ENCODE measurements at regions of chr13 and their contacts with region 1.

Region 1: GRCh38 chr13:95676762-95677563 is at the start of gene DNAJC3:
- DNase-seq: peak; percentile 97
- ATAC-seq: peak; percentile 94
- H3K4me3 Mint-ChIP-seq: peak within 1 kb of the TSS; percentile 96
- H3K27ac Mint-ChIP-seq: peak within 1 kb of the TSS; percentile 92
- H3K4me1 Mint-ChIP-seq: peaks cover 52% of the 10 kb centered on the region
- H3K27me3 Mint-ChIP-seq: no peaks in the 10 kb centered on the region
- CTCF ChIP-seq: no peak
- total RNA-seq, gene DNAJC3: 14.7 and 17.4 TPM in 2 replicates

Region 2: GRCh38 chr13:94549232-94550061 is 1127.5 kb before region 1 on chr13:
- CTCF ChIA-PET with region 1: no interaction called
- POLR2A ChIA-PET with region 1: interaction called, 3 read pairs
- intact Hi-C with region 1: loop called (anchors 2 kb)
- DNase-seq: peak; percentile 86
- ATAC-seq: peak; percentile 90
- H3K4me3 Mint-ChIP-seq: peak overlapping the region; percentile 88
- H3K27ac Mint-ChIP-seq: peak overlapping the region; percentile 92
- H3K4me1 Mint-ChIP-seq: peaks cover 31% of the 10 kb centered on the region
- H3K27me3 Mint-ChIP-seq: peaks cover 4% of the 10 kb centered on the region
- CTCF ChIP-seq: no peak

Region 3: GRCh38 chr13:95284436-95284835 is 392.5 kb before region 1 on chr13:
- CTCF ChIA-PET with region 1: no interaction called
- POLR2A ChIA-PET with region 1: no interaction called
- intact Hi-C with region 1: loop called (anchors 5 kb)
- DNase-seq: no peak
- ATAC-seq: no peak
- H3K4me3 Mint-ChIP-seq: no peak overlapping the region
- H3K27ac Mint-ChIP-seq: no peak overlapping the region
- H3K4me1 Mint-ChIP-seq: peaks cover 45% of the 10 kb centered on the region
- H3K27me3 Mint-ChIP-seq: no peaks in the 10 kb centered on the region
- CTCF ChIP-seq: no peak

Region 4: GRCh38 chr13:95387733-95388207 is 289.2 kb before region 1 on chr13:
- CTCF ChIA-PET with region 1: no interaction called
- POLR2A ChIA-PET with region 1: no interaction called
- intact Hi-C with region 1: loop called (anchors 5 kb)
- DNase-seq: no peak
- ATAC-seq: no peak
- H3K4me3 Mint-ChIP-seq: no peak overlapping the region
- H3K27ac Mint-ChIP-seq: no peak overlapping the region
- H3K4me1 Mint-ChIP-seq: peaks cover 32% of the 10 kb centered on the region
- H3K27me3 Mint-ChIP-seq: peaks cover 55% of the 10 kb centered on the region
- CTCF ChIP-seq: no peak

Region 5: GRCh38 chr13:95704510-95704909 is 27.5 kb after region 1 on chr13:
- CTCF ChIA-PET with region 1: no interaction called
- POLR2A ChIA-PET with region 1: interaction called, 6 read pairs
- intact Hi-C with region 1: loop called (anchors 2 kb)
- DNase-seq: no peak
- ATAC-seq: no peak
- H3K4me3 Mint-ChIP-seq: no peak overlapping the region
- H3K27ac Mint-ChIP-seq: no peak overlapping the region
- H3K4me1 Mint-ChIP-seq: peaks cover 48% of the 10 kb centered on the region
- H3K27me3 Mint-ChIP-seq: no peaks in the 10 kb centered on the region
- CTCF ChIP-seq: no peak

Region 6: DNA sequence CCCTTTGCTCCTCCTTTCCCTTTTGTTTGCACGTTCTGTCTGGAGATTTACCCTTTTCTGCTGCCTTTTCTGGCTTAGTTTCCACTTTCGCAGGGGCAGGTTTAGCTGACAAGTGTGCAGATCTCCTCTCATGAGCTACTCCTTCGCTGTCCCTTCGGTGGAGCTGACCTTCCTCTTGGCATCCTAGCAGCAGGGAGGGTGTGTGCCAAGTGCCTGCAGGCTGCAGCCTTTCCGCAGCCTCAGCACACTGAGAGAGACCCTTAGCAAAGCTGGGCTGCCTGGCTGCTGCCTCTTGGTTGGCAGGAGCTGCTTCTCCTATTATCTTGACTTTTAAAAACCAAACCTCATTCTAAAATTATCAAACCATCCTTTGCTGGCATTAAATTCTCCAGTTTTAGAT is 132.5 kb after region 1 on chr13:
- CTCF ChIA-PET with region 1: no interaction called
- POLR2A ChIA-PET with region 1: no interaction called
- intact Hi-C with region 1: no loop called
- DNase-seq: no peak
- ATAC-seq: no peak
- H3K4me3 Mint-ChIP-seq: no peak overlapping the region
- H3K27ac Mint-ChIP-seq: no peak overlapping the region
- H3K4me1 Mint-ChIP-seq: no peaks in the 10 kb centered on the region
- H3K27me3 Mint-ChIP-seq: no peaks in the 10 kb centered on the region
- CTCF ChIP-seq: no peak

Measured in activated B cell treated with CpG ODN at 0.5 μM for 24 hours (primary cell).